Left cardiac atrium (tissue), 4 donors: ENCODE measurements at regions of chr20 and their contacts with region 1.

Region 1: GRCh38 chr20:9068851-9069663 is at the start of gene PLCB4:
- DNase-seq: peak; percentile 57
- ATAC-seq: peak; percentile 22 to 39
- total RNA-seq, gene PLCB4: 29.7 to 33.4 TPM

Region 2: DNA sequence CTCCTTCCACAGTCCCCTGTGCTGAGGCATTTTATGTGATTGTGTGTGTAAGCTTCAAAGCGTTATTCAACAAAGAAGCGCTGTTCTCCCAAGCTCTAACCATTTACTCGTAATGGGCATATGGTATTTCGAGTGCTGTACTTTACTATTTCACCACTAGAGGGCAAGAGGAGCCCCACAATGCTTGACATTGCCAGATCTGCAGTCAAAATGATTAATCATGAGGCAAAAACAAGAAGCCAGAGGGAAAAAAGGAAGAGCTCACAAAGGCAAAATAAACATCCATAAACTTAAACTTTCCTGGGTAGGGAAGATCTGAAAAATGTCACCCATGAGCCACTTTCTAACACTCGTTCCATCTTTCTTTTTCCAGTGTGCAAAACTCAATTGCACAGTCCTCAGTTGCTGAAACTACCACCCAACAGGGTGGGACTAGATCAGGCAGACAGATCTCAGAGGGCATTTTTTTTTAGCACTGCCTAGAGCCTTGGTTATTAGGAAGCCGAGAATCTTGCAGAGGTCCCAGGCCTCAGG is 215.2 kb before region 1 on chr20:
- intact Hi-C with region 1: loop called in 1 of 2 experiments (anchors 10 kb)
- DNase-seq: no peak
- ATAC-seq: peak; percentile 85 to 87

Region 3: GRCh38 chr20:8901237-8902025 is 167.6 kb before region 1 on chr20:
- intact Hi-C with region 1: loop called in 1 of 2 experiments (anchors 5 kb)
- DNase-seq: peak; percentile 41
- ATAC-seq: peak; percentile 82 to 89

Region 4: GRCh38 chr20:8946036-8946940 is 122.8 kb before region 1 on chr20:
- intact Hi-C with region 1: loop called in 1 of 2 experiments (anchors 10 kb)
- DNase-seq: no peak
- ATAC-seq: peak; percentile 70 to 73